Naive thymus-derived CD4-positive, alpha-beta T cell (primary cell): ENCODE measurements at regions of chr5 and their contacts with region 1.

Region 1: DNA sequence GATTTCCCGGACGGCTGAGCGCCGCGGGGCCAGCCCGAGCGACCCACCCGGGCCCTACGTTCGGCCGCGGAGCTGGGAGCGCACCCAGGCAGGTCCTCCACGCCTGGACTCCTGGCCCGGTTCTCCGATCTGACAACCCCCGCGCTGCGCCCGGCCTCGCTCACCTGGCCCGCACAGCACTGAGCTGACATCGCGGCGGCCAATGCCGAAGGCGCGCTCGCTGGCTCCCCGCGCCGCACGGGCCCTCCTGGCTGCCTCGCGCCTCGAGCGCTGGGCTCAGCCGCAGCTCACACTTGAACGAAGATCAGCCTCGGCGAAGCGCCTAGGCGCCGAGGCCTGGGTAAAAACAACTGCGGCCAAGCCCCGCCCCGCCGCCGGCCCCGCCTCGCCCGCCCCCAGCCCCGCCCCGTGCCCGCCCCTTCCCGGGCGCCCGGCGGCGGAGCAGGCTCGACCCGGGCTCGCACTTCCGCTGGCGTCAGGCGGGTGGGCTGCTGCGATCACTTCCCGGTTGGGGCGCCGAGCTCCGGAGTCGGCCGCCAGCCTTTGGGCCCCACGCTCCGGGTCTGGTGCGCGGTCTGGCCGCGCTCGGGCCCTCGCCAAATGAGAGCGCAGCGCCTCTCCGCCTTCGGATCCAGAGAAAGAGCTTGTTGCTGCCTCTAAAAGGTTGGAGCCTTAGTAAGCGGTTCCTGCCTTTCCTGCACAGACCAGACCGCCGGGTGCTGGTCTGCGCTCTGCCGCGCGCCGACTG is at the start of gene SERINC5:
- DNase-seq: peak; percentile 79 to 89 (median 86)
- ATAC-seq: peak; percentile 91
- H3K4me3 ChIP-seq: peak within 1 kb of the TSS; percentile 73
- H3K4me3 Mint-ChIP-seq: peak within 1 kb of the TSS; percentile 92 to 99 (median 96)
- H3K27ac ChIP-seq: peak within 1 kb of the TSS; percentile 88
- H3K27ac Mint-ChIP-seq: peak within 1 kb of the TSS; percentile 94 to 99 (median 98)
- H3K4me1 ChIP-seq: peaks cover 19 to 30% of the 10 kb centered on the region in 2 donors
- H3K4me1 Mint-ChIP-seq: peaks cover 40 to 56% (median 46%) of the 10 kb centered on the region in 7 donors
- H3K27me3 ChIP-seq: no peaks in the 10 kb centered on the region
- H3K27me3 Mint-ChIP-seq: no peaks in the 10 kb centered on the region
- total RNA-seq, gene SERINC5: 71.2 to 164 (median 163) TPM

Region 2: DNA sequence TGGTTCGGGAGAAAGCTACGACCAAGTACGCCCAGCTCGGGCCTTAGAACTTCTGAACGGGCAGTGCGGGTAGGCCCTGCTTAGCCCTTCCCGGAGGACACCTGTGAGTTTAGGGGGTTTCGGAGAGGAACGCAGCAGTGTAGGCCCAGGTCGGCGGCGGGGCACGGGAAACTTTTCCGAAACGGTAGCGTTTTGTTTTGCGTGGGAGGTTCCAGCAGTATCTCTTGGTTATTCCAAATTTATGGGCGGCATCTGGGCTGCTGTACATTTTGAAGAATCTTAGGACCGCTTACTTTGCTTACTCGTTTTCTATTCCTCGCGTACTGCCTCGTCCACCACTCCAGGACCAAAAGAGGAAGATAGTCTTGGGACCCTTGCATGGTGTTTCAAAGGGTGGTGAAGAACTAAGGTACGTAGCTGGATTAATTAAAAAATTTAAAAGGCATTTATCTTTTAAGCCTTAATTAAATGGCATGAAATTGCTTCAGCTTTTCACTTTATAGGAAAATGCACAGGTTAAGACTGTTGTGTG is 643.2 kb before region 1 on chr5:
- CTCF ChIA-PET with region 1: no interaction called
- POLR2A ChIA-PET with region 1: no interaction called
- intact Hi-C with region 1: loop called in 1 of 2 experiments (anchors 10 kb)
- DNase-seq: no peak
- ATAC-seq: no peak
- H3K4me3 ChIP-seq: peak overlapping the region; percentile 84
- H3K4me3 Mint-ChIP-seq: peak overlapping the region; percentile 95 to 100 (median 97)
- H3K27ac ChIP-seq: peak overlapping the region; percentile 90
- H3K27ac Mint-ChIP-seq: peak overlapping the region; percentile 91 to 99 (median 98)
- H3K4me1 ChIP-seq: peaks cover 14 to 18% of the 10 kb centered on the region in 2 donors
- H3K4me1 Mint-ChIP-seq: peaks cover 25 to 58% (median 44%) of the 10 kb centered on the region in 7 donors
- H3K27me3 ChIP-seq: no peaks in the 10 kb centered on the region
- H3K27me3 Mint-ChIP-seq: peaks cover 0 to 6% (median 2%) of the 10 kb centered on the region in 5 donors

Region 3: GRCh38 chr5:80134879-80135278 is 121.0 kb before region 1 on chr5:
- CTCF ChIA-PET with region 1: interaction called, 5 read pairs
- POLR2A ChIA-PET with region 1: interaction called, 36 read pairs
- intact Hi-C with region 1: loop called (anchors 1 to 5 kb)
- DNase-seq: no peak
- ATAC-seq: no peak
- H3K4me3 ChIP-seq: no peak overlapping the region
- H3K4me3 Mint-ChIP-seq: peak overlapping the region in 8 of 10 donors; percentile 34 to 83 (median 76)
- H3K27ac ChIP-seq: peak overlapping the region; percentile 72
- H3K27ac Mint-ChIP-seq: peak overlapping the region; percentile 83 to 96 (median 92)
- H3K4me1 ChIP-seq: peaks cover 52 to 88% of the 10 kb centered on the region in 2 donors
- H3K4me1 Mint-ChIP-seq: peaks cover 60 to 97% (median 82%) of the 10 kb centered on the region in 7 donors
- H3K27me3 ChIP-seq: no peaks in the 10 kb centered on the region
- H3K27me3 Mint-ChIP-seq: no peaks in the 10 kb centered on the region

Region 4: DNA sequence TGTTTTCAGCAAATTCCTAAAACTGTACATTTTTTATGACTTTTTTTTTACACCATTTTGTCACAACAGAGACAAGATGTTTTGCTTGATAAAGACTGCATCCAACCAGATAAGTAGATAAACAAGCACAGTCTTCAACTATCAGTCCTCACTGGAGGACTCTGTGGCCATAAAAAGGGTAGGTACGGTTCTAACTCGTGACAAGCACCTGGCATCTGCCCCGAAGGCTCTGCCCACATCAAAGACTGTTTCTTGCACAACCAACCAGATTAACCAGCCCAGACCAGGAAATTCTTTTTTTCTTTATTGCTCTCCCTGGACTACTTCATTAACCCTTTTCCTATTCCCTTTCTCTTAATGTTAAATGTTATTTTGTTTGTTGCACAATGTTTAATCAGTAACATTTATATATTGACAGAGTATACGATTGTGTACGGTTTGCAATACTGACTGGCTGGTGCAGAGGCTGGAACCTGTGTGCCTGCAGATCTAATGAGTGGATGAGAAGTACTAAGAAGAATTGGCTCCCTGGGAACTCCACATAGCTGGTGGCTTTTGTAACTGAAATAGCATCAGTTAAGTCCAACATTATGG is 74.2 kb before region 1 on chr5:
- CTCF ChIA-PET with region 1: no interaction called
- POLR2A ChIA-PET with region 1: interaction called, 75 read pairs
- intact Hi-C with region 1: loop called (anchors 1 to 2 kb)
- DNase-seq: peak in 7 of 9 donors; percentile 57 to 70 (median 68)
- ATAC-seq: peak; percentile 79
- H3K4me3 ChIP-seq: no peak overlapping the region
- H3K4me3 Mint-ChIP-seq: peak overlapping the region; percentile 54 to 100 (median 78)
- H3K27ac ChIP-seq: peak overlapping the region; percentile 79
- H3K27ac Mint-ChIP-seq: peak overlapping the region; percentile 74 to 99 (median 97)
- H3K4me1 ChIP-seq: peaks cover 57 to 95% of the 10 kb centered on the region in 2 donors
- H3K4me1 Mint-ChIP-seq: peaks cover 65 to 96% (median 89%) of the 10 kb centered on the region in 7 donors
- H3K27me3 ChIP-seq: no peaks in the 10 kb centered on the region
- H3K27me3 Mint-ChIP-seq: no peaks in the 10 kb centered on the region

Region 5: GRCh38 chr5:80216753-80217596 is 38.9 kb before region 1 on chr5:
- CTCF ChIA-PET with region 1: interaction called, 7 read pairs
- POLR2A ChIA-PET with region 1: interaction called, 64 read pairs
- intact Hi-C with region 1: loop called (anchors 1 to 2 kb)
- DNase-seq: peak in 1 of 9 donors; percentile 58
- ATAC-seq: no peak
- H3K4me3 ChIP-seq: peak overlapping the region; percentile 35
- H3K4me3 Mint-ChIP-seq: peak overlapping the region; percentile 45 to 89 (median 81)
- H3K27ac ChIP-seq: peak overlapping the region; percentile 63
- H3K27ac Mint-ChIP-seq: peak overlapping the region in 8 of 9 donors; percentile 83 to 99 (median 93)
- H3K4me1 ChIP-seq: peaks cover 15 to 87% of the 10 kb centered on the region in 2 donors
- H3K4me1 Mint-ChIP-seq: peaks cover 57 to 100% (median 91%) of the 10 kb centered on the region in 7 donors
- H3K27me3 ChIP-seq: no peaks in the 10 kb centered on the region
- H3K27me3 Mint-ChIP-seq: no peaks in the 10 kb centered on the region

Region 6: GRCh38 chr5:80275347-80275746 is 19.4 kb after region 1 on chr5:
- CTCF ChIA-PET with region 1: interaction called, 7 read pairs
- POLR2A ChIA-PET with region 1: interaction called, 153 read pairs
- intact Hi-C with region 1: loop called (anchors 1 kb)
- DNase-seq: peak in 6 of 9 donors; percentile 28 to 65 (median 48)
- ATAC-seq: peak; percentile 57
- H3K4me3 ChIP-seq: no peak overlapping the region
- H3K4me3 Mint-ChIP-seq: no peak overlapping the region
- H3K27ac ChIP-seq: no peak overlapping the region
- H3K27ac Mint-ChIP-seq: peak overlapping the region in 7 of 9 donors; percentile 0 to 75 (median 49)
- H3K4me1 ChIP-seq: peaks cover 0 to 19% of the 10 kb centered on the region in 2 donors
- H3K4me1 Mint-ChIP-seq: peaks cover 12 to 36% (median 27%) of the 10 kb centered on the region in 7 donors
- H3K27me3 ChIP-seq: no peaks in the 10 kb centered on the region
- H3K27me3 Mint-ChIP-seq: no peaks in the 10 kb centered on the region

Region 7: DNA sequence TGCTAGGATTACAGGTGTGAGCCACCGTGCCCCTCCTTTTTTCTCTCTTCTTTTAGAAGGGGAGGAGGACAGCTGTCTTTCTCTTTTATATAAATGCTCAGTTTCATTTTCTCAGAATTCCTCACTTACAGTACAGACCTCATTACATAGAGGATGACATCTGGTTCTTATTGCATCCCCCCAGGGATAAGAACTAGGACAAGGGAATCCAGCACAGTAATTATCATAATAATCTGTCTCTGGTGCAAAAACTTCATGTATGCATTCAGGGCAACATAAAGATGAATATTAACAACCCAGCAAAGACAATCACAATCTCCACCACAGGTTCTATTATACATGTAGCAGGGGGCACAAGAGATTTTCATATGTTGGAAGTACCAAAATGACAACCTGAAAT is 69.0 kb after region 1 on chr5:
- CTCF ChIA-PET with region 1: no interaction called
- POLR2A ChIA-PET with region 1: no interaction called
- intact Hi-C with region 1: no loop called
- DNase-seq: no peak
- ATAC-seq: no peak
- H3K4me3 ChIP-seq: no peak overlapping the region
- H3K4me3 Mint-ChIP-seq: no peak overlapping the region
- H3K27ac ChIP-seq: no peak overlapping the region
- H3K27ac Mint-ChIP-seq: no peak overlapping the region
- H3K4me1 ChIP-seq: no peaks in the 10 kb centered on the region
- H3K4me1 Mint-ChIP-seq: peaks cover 0 to 1% (median 0%) of the 10 kb centered on the region in 7 donors
- H3K27me3 ChIP-seq: no peaks in the 10 kb centered on the region
- H3K27me3 Mint-ChIP-seq: peaks cover 0 to 36% (median 9%) of the 10 kb centered on the region in 5 donors

Region 8: DNA sequence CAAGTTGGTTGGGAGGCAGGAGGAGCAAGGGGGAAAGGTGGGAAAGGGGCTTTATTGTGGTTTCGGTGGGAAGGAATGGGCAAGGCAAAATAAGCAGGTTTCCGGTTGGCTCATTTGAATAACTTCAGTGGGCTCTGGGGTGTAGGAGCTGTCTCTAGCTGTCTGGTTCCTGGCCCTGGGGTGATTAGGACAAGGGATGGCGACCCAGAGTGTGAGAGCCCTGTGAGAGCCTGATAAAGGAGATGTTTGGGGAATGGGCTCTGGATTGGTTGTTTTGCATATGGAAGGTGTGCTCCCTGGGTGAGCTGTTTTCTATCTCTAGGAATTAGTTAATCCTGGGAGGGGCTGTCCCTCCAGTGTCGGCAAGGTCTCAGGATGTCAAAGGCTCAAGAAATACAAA is 298.7 kb after region 1 on chr5:
- CTCF ChIA-PET with region 1: no interaction called
- POLR2A ChIA-PET with region 1: no interaction called
- intact Hi-C with region 1: no loop called
- DNase-seq: no peak
- ATAC-seq: no peak
- H3K4me3 ChIP-seq: no peak overlapping the region
- H3K4me3 Mint-ChIP-seq: no peak overlapping the region
- H3K27ac ChIP-seq: no peak overlapping the region
- H3K27ac Mint-ChIP-seq: no peak overlapping the region
- H3K4me1 ChIP-seq: no peaks in the 10 kb centered on the region
- H3K4me1 Mint-ChIP-seq: no peaks in the 10 kb centered on the region
- H3K27me3 ChIP-seq: no peaks in the 10 kb centered on the region
- H3K27me3 Mint-ChIP-seq: peaks cover 25 to 50% (median 45%) of the 10 kb centered on the region in 5 donors